Activated naive CD4-positive, alpha-beta T cell treated with anti-CD3 and anti-CD28 coated beads for 36 hours (primary cell): ENCODE measurements at regions of chr5 and their contacts with region 1.

Region 1: DNA sequence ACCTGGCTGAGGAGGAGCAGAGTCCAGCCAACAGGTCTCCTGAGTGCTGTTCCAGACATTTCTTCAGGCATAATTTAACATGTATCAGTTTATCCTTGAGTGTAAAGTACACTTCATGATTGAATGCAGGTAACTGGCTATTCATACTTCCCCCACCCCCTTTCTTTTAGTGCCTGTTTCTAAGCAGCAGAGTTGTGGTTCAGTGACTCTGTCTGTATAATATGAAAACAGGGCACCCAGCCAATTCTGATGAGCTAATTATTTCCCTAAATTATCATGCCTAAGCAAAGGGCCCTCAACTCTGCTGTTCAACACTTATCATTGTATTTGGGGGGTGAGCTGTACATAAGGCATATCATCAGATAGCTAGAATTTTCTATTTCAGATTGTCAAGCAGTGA is 51.9 kb upstream of the ZSWIM6 start:
- DNase-seq: peak; percentile 44
- H3K4me3 Mint-ChIP-seq: no peak overlapping the region
- H3K27ac Mint-ChIP-seq: no peak overlapping the region
- H3K4me1 Mint-ChIP-seq: peaks cover 31% of the 10 kb centered on the region
- H3K27me3 Mint-ChIP-seq: no peaks in the 10 kb centered on the region

Region 2: GRCh38 chr5:60185231-60186099 is 1094.7 kb before region 1 on chr5:
- CTCF ChIA-PET with region 1: no interaction called
- intact Hi-C with region 1: no loop called
- DNase-seq: no peak
- H3K4me3 Mint-ChIP-seq: no peak overlapping the region
- H3K27ac Mint-ChIP-seq: no peak overlapping the region
- H3K4me1 Mint-ChIP-seq: no peaks in the 10 kb centered on the region
- H3K27me3 Mint-ChIP-seq: no peaks in the 10 kb centered on the region

Region 3: GRCh38 chr5:60944904-60945812 is 335.0 kb before region 1 on chr5 and contains the starts of genes ERCC8 and NDUFAF2:
- CTCF ChIA-PET with region 1: no interaction called
- intact Hi-C with region 1: loop called (anchors 5 kb)
- DNase-seq: peak; percentile 92
- H3K4me3 Mint-ChIP-seq: no peak within 1 kb of the TSS
- H3K27ac Mint-ChIP-seq: peak within 1 kb of the TSS; percentile 62
- H3K4me1 Mint-ChIP-seq: peaks cover 24% of the 10 kb centered on the region
- H3K27me3 Mint-ChIP-seq: no peaks in the 10 kb centered on the region
- total RNA-seq, gene ERCC8: 7.8 to 9.1 TPM
- total RNA-seq, gene NDUFAF2: 35.6 to 38.5 TPM

Region 4: GRCh38 chr5:61048534-61048933 is 231.7 kb before region 1 on chr5:
- CTCF ChIA-PET with region 1: no interaction called
- intact Hi-C with region 1: loop called (anchors 5 kb)
- DNase-seq: no peak
- H3K4me3 Mint-ChIP-seq: no peak overlapping the region
- H3K27ac Mint-ChIP-seq: no peak overlapping the region
- H3K4me1 Mint-ChIP-seq: no peaks in the 10 kb centered on the region
- H3K27me3 Mint-ChIP-seq: no peaks in the 10 kb centered on the region

Region 5: DNA sequence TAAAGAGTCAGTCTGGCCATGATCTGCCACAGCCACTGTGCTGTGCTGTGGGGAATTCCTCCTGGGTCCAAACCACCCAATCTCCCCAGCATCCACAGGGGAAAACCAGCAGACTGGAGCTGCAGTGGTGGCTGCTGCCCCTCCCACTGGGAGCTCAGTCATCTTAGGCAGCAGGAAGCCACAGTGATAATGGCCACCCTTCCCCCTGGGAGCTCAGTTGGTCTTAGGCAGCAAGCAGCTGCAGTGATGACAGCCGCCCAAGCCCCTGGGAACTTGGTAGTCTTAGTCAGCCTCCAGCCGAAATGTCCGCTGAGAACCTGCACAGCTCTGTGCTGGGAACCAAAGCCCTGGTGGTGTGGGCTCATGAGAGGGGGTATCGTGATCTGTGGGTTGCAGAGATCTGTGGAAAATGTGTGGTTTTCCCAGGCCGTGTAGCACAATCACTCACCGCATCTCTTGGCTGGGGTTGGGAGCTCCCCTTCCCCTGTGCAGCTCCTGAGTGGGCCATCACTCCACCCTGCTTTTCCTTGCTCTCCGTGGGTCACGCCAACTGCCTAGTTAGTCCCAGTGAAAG is 79.5 kb before region 1 on chr5:
- CTCF ChIA-PET with region 1: no interaction called
- intact Hi-C with region 1: loop called (anchors 5 kb)
- DNase-seq: no peak
- H3K4me3 Mint-ChIP-seq: no peak overlapping the region
- H3K27ac Mint-ChIP-seq: no peak overlapping the region
- H3K4me1 Mint-ChIP-seq: peaks cover 7% of the 10 kb centered on the region
- H3K27me3 Mint-ChIP-seq: peaks cover 37% of the 10 kb centered on the region

Region 6: GRCh38 chr5:61578858-61579503 is 298.8 kb after region 1 on chr5:
- CTCF ChIA-PET with region 1: no interaction called
- intact Hi-C with region 1: loop called (anchors 2 kb)
- DNase-seq: no peak
- H3K4me3 Mint-ChIP-seq: no peak overlapping the region
- H3K27ac Mint-ChIP-seq: no peak overlapping the region
- H3K4me1 Mint-ChIP-seq: no peaks in the 10 kb centered on the region
- H3K27me3 Mint-ChIP-seq: peaks cover 3% of the 10 kb centered on the region

Region 7: GRCh38 chr5:61658592-61659008 is 378.4 kb after region 1 on chr5:
- CTCF ChIA-PET with region 1: interaction called, 3 read pairs
- intact Hi-C with region 1: loop called (anchors 1 kb)
- DNase-seq: peak; percentile 90
- H3K4me3 Mint-ChIP-seq: no peak overlapping the region
- H3K27ac Mint-ChIP-seq: no peak overlapping the region
- H3K4me1 Mint-ChIP-seq: no peaks in the 10 kb centered on the region
- H3K27me3 Mint-ChIP-seq: peaks cover 11% of the 10 kb centered on the region